ENCODE measurements at regions of chr19 and their contacts with region 1.

Region 1: DNA sequence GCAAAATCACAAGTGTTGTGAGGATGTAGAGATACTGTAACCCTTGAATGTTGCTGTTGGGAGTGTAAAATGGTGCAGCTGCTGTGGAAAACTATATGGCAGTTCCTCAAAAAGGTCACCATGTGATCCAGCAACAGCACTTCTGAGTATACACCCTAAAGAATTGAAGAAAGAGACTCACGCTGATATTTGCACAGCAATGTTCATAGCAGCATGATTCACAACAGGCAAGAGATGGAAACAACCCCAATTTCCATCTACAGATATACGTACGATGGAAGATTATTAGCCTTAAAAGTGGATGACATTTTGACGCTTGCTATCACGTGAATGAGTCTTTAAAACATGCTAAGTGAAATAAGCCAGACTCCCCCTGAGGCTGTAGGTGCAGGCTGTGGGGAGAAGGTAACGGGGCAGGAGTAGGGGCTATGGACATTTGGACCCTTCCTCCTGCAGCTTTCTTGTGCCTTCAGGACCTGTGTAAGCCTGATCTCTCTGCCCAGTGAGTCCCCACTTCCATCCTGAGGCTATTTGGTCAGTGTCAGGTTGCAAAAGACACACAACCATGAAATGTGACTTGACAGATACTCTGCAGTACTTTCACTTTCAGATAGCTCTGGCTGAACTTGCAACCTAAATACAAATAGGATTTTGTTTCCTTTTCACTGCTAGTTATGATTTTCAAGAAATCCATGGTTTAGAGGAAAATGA is 17.6 kb upstream of the EID2 start:
- DNase-seq: no peak
- H3K4me3 ChIP-seq: no peak overlapping the region
- H3K27ac ChIP-seq: peak overlapping the region; percentile 44
- H3K4me1 ChIP-seq: no peaks in the 10 kb centered on the region
- H3K27me3 ChIP-seq: no peaks in the 10 kb centered on the region
- CTCF ChIP-seq: no peak

Region 2: GRCh38 chr19:39765091-39766076 is 207.8 kb after region 1 on chr19:
- intact Hi-C with region 1: loop called (anchors 10 kb)
- DNase-seq: peak; percentile 44
- H3K4me3 ChIP-seq: no peak overlapping the region
- H3K27ac ChIP-seq: no peak overlapping the region
- H3K4me1 ChIP-seq: no peaks in the 10 kb centered on the region
- H3K27me3 ChIP-seq: no peaks in the 10 kb centered on the region
- CTCF ChIP-seq: peak; percentile 55

Region 3: DNA sequence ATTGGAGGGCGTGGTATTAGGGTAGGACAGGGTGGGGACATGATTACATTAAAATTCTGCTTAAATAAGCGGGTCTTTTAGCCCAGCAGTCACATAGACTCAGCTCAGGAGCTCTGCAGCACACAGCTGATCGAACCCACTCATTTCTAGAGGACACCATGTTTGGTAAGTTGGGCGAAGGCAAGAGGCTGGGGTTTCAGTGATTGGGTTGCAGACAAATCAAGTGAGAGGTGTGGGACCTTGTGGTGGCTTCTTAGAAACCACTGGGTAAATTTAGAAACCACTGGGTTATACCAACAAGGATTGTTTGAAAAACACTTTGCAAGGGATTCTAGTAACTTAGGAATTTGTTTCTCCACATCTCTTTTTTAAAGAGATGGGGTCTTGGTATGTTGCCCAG is 221.2 kb after region 1 on chr19 and contains the start of gene LEUTX:
- intact Hi-C with region 1: no loop called
- DNase-seq: no peak
- H3K4me3 ChIP-seq: no peak within 1 kb of the TSS
- H3K27ac ChIP-seq: no peak within 1 kb of the TSS
- H3K4me1 ChIP-seq: no peaks in the 10 kb centered on the region
- H3K27me3 ChIP-seq: no peaks in the 10 kb centered on the region
- CTCF ChIP-seq: no peak
- total RNA-seq, gene LEUTX: not detected